ENCODE measurements at regions of chr20 and their contacts with region 1.

Region 1: GRCh38 chr20:38589967-38590675 is 9.1 kb downstream of the ADIG start:
- DNase-seq: no peak
- H3K4me3 ChIP-seq: no peak overlapping the region
- H3K27ac ChIP-seq: no peak overlapping the region
- H3K4me1 ChIP-seq: no peaks in the 10 kb centered on the region
- H3K27me3 ChIP-seq: peaks cover 0 to 16% of the 10 kb centered on the region in 2 donors
- CTCF ChIP-seq: no peak

Region 2: DNA sequence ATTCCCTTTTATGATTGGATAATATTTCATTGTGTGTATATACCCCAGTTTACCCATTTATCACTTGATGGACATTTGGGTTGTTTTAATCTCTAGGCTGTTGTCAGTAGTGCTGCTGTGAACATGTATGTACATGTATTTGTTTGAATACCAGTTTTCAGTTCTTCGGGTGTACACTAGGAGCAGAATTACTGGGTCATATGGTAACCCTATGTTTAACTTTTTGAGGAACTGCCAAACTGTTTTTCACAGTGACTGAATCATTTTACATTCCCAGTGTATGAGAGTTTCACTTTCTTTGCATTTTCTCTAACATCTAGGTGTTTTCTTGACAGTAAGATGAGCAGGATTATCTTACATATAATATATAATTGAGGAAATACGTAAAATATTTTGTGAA is 53.8 kb before region 1 on chr20:
- intact Hi-C with region 1: no loop called
- DNase-seq: no peak
- H3K4me3 ChIP-seq: no peak overlapping the region
- H3K27ac ChIP-seq: no peak overlapping the region
- H3K4me1 ChIP-seq: no peaks in the 10 kb centered on the region
- H3K27me3 ChIP-seq: no peaks in the 10 kb centered on the region
- CTCF ChIP-seq: no peak

Region 3: GRCh38 chr20:38635721-38636288 is 45.7 kb after region 1 on chr20:
- intact Hi-C with region 1: loop called (anchors 5 kb)
- DNase-seq: no peak
- H3K4me3 ChIP-seq: no peak overlapping the region
- H3K27ac ChIP-seq: no peak overlapping the region
- H3K4me1 ChIP-seq: peaks cover 0 to 4% (median 0%) of the 10 kb centered on the region in 4 donors
- H3K27me3 ChIP-seq: peaks cover 0 to 28% of the 10 kb centered on the region in 2 donors
- CTCF ChIP-seq: no peak

Measured in tibial artery (tissue), 4 donors.